Transverse colon (tissue), 4 donors: ENCODE measurements at regions of chr10 and their contacts with region 1.

Region 1: DNA sequence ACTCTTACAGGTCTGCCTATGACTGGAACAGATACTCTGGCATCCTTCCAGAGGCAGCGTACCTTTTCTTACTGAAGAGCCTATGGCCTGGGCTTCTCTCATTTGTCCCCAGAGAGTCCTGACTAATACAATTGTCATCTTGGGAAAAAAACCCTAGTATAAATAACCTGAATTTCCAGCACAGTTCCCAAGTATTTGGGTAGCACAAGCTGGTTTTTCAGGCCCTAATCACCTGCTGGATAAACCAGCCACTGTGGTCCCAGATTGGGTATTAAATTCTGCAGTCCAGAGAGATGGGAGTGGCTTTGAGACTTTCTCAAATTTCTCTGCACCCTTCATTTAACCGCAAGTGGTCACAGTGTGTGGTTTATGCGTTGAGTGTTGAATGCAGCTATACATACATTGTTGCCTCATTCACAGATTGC is 186.8 kb upstream of the NEBL start:
- DNase-seq: no peak
- H3K4me3 ChIP-seq: no peak overlapping the region
- H3K27ac ChIP-seq: no peak overlapping the region
- H3K4me1 ChIP-seq: no peaks in the 10 kb centered on the region
- H3K27me3 ChIP-seq: no peaks in the 10 kb centered on the region
- CTCF ChIP-seq: no peak
- EP300 ChIP-seq: no peak
- POLR2A ChIP-seq: no peak

Region 2: GRCh38 chr10:21265621-21266020 is 181.7 kb after region 1 on chr10:
- in situ Hi-C with region 1: loop called (anchors 5 to 10 kb)
- intact Hi-C with region 1: no loop called
- DNase-seq: no peak
- H3K4me3 ChIP-seq: no peak overlapping the region
- H3K27ac ChIP-seq: no peak overlapping the region
- H3K4me1 ChIP-seq: no peaks in the 10 kb centered on the region
- H3K27me3 ChIP-seq: no peaks in the 10 kb centered on the region
- CTCF ChIP-seq: no peak
- EP300 ChIP-seq: no peak
- POLR2A ChIP-seq: no peak

Region 3: DNA sequence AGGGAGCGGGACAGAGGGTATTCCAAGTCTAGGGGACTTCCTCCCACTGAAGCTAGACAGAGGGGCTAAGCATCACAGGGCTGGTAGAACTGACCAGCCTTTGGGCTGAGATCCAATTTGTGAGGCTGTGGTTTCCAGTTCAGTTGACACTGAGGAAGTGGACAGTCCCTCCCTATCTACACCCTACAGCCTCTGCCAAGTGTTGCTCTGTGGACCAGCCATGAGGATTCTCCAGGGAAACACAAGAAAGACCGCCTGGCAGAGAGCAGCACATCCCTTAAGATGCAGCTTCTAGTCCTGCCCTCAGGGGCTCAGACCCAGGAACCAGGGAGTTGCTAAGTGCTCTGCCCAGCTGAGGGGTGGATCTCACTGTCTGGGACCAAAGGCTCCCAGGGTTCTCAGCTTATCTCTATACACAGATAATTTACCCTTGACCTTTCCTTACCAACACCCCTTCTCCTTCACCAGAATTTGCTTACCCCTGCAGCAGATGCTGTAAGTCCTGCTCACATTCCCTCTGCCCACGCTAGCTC is 189.6 kb after region 1 on chr10:
- in situ Hi-C with region 1: loop called (anchors 5 to 10 kb)
- intact Hi-C with region 1: no loop called
- DNase-seq: no peak
- H3K4me3 ChIP-seq: no peak overlapping the region
- H3K27ac ChIP-seq: no peak overlapping the region
- H3K4me1 ChIP-seq: no peaks in the 10 kb centered on the region
- H3K27me3 ChIP-seq: no peaks in the 10 kb centered on the region
- CTCF ChIP-seq: no peak
- EP300 ChIP-seq: no peak
- POLR2A ChIP-seq: no peak